ENCODE measurements at regions of chr7 and their contacts with region 1.

Region 1: DNA sequence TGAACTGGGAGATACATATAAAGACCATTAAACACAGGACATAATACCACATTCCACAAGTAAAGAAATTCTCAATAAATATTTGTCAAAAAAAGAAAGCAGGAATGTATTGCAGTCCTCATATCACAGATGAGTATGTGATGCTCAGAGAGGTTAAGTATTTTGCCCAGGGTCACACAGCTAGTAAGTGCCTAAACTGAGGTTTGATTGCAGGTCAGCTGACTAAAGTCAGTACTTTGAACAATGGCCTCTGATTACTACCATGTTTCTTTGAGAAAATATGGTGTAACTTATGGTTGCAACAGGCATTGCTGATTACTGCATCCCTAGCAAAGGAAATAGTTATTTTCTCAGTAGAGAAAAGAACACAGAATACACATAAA is 267.1 kb downstream of the ELMO1 start:
- DNase-seq: no peak
- CTCF ChIP-seq: no peak

Region 2: DNA sequence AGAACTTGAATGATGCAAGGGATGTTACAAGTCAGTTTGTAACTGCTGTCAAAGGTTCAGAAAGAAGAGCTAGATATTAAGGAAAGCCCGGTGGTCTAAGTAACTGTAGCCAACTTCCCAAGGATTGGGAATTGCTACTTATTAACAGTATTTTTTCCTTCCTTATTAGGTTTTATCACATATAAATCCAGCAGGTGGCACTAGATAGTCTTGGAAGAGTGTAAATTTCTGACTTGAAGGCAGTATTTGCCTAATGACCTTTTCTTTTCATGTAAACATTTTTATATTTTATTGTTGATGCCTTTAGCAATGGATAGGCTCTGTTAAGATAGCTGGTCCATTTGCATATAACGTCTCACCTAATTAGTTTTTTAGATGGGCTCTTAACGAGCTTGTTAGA is 740.7 kb before region 1 on chr7:
- CTCF ChIA-PET with region 1: interaction called, 13 read pairs
- POLR2A ChIA-PET with region 1: no interaction called
- DNase-seq: no peak
- CTCF ChIP-seq: no peak

Region 3: GRCh38 chr7:36831049-36831448 is 350.5 kb before region 1 on chr7:
- CTCF ChIA-PET with region 1: no interaction called
- POLR2A ChIA-PET with region 1: no interaction called
- DNase-seq: no peak
- CTCF ChIP-seq: no peak

Region 4: GRCh38 chr7:36958111-36958733 is 223.3 kb before region 1 on chr7:
- CTCF ChIA-PET with region 1: interaction called, 11 read pairs
- POLR2A ChIA-PET with region 1: no interaction called
- DNase-seq: no peak
- CTCF ChIP-seq: no peak

Region 5: GRCh38 chr7:36986429-36987362 is 194.8 kb before region 1 on chr7:
- CTCF ChIA-PET with region 1: interaction called, 91 read pairs
- POLR2A ChIA-PET with region 1: no interaction called
- DNase-seq: peak; percentile 75
- CTCF ChIP-seq: peak; percentile 67

Region 6: GRCh38 chr7:37027557-37028341 is 153.8 kb before region 1 on chr7:
- CTCF ChIA-PET with region 1: interaction called, 23 read pairs
- POLR2A ChIA-PET with region 1: no interaction called
- DNase-seq: no peak
- CTCF ChIP-seq: no peak

Region 7: GRCh38 chr7:37193087-37193774 is 11.7 kb after region 1 on chr7:
- CTCF ChIA-PET with region 1: interaction called, 37 read pairs
- POLR2A ChIA-PET with region 1: no interaction called
- DNase-seq: no peak
- CTCF ChIP-seq: no peak